Naive thymus-derived CD4-positive, alpha-beta T cell (primary cell): ENCODE measurements at regions of chr16 and their contacts with region 1.

Region 1: DNA sequence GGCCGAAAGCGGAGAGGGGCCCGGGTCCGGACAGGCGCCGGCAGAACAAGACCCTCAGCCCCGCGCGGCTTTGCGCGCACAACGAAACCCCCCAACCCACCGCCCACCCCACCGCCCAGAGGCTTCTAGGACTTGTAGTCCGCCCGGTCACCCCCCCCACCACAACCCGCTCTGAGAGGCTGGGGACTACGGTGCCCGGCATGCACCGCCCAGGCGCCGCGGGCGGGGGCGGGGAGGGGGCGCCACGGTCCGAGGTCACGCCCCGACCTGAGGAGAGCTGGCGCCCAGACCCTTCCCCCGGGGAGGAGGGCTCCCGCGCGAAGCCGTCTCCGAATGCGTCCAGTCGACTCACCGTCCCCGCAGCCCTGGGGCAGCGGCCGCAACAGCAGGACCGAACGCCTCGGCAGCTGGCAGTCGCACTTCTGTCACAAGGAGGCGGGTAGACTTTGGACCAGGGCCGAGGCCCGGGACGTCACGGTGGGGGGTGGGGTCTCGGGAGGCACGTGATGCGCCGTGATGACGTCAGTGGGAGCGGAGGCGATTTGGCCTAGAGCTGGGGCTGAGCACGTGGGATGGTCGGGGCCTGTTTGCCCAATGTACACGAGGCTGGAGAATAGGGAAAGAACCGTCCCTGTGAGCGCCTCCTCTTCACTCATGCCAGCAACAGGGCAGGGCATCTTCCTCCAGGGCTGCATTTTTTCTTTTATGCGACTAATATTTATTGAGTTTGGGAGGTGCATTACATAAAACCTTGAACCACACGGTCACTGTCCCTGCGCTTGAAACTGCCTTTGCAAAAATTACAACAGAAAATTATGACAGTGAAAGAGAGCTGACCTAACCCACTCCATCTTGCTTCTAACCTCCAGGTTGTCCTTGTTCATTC is at the start of gene CDIP1:
- DNase-seq: peak; percentile 85 to 93 (median 90)
- ATAC-seq: peak; percentile 92
- H3K4me3 ChIP-seq: peak within 1 kb of the TSS; percentile 81
- H3K4me3 Mint-ChIP-seq: peak within 1 kb of the TSS; percentile 66 to 91 (median 82)
- H3K27ac ChIP-seq: peak within 1 kb of the TSS; percentile 96
- H3K27ac Mint-ChIP-seq: peak within 1 kb of the TSS; percentile 78 to 97 (median 92)
- H3K4me1 ChIP-seq: peaks cover 10 to 33% of the 10 kb centered on the region in 2 donors
- H3K4me1 Mint-ChIP-seq: peaks cover 24 to 44% (median 40%) of the 10 kb centered on the region in 7 donors
- H3K27me3 ChIP-seq: no peaks in the 10 kb centered on the region
- H3K27me3 Mint-ChIP-seq: peaks cover 0 to 9% (median 0%) of the 10 kb centered on the region in 5 donors
- total RNA-seq, gene CDIP1: 28.1 to 41.1 (median 31.0) TPM

Region 2: DNA sequence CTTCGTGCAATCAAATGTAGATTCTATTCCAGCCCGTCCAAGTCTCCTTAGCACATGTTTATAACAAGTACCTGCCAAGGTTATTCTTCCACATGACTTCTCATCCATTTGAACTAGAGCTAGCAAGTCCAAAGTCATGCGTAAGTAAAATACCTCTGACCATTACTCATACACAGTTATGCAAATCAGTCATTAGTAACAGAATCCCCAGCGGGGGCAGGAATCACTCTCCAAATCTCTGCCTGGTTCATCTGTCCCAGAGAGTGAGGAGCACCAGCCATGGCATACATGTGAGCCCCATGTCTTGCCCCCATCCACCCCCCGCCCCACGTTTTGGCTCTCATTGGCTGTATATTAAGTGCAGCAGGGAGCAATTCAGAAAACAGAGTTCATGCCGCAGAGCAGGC is 324.4 kb before region 1 on chr16:
- CTCF ChIA-PET with region 1: no interaction called
- POLR2A ChIA-PET with region 1: no interaction called
- intact Hi-C with region 1: no loop called
- DNase-seq: no peak
- ATAC-seq: no peak
- H3K4me3 ChIP-seq: no peak overlapping the region
- H3K4me3 Mint-ChIP-seq: no peak overlapping the region
- H3K27ac ChIP-seq: no peak overlapping the region
- H3K27ac Mint-ChIP-seq: no peak overlapping the region
- H3K4me1 ChIP-seq: no peaks in the 10 kb centered on the region
- H3K4me1 Mint-ChIP-seq: no peaks in the 10 kb centered on the region
- H3K27me3 ChIP-seq: no peaks in the 10 kb centered on the region
- H3K27me3 Mint-ChIP-seq: peaks cover 0 to 10% (median 0%) of the 10 kb centered on the region in 5 donors

Region 3: DNA sequence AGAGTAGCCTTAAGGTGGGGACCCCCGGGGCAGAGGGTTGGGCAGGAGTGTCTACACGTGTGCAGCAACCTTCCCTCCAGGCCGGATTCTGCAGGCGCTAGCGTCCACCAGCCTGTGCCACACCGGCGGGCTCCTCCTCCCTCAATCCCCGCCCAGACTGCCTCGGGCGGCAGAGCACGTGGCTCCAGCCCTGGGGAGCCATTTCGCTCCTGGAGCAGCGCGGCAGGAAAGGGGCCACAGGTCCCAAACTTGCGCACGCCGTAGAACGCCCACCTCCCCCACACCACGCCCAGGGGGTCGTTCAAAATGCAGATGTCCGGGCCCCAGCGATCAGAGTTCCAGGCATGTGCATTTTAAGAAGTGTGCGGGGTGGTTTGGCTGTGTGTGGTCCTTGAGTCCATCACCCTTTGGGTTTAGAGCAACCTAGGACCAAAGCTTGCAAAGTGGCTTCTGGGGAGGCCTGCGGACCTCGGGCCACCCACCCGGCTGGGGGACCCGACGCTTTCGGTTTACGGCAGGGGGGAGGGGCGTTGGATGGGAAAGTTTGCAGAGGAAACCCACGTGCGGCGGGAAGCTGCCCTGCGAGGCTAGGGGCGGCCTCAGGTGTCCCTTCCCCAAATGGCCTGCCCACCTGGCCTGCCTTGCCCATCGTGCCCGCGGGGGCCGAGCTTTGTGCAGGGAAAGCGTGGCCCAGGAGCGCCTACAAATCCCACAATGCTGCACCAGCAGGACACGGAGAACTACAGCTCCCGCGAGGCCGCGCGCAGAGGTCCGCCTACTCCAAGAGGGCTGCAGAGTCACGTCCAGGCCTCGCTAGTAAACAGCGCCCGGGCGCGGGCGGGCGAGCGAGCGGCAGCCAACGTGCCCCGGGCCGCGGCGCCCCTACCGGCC is 267.2 kb before region 1 on chr16:
- CTCF ChIA-PET with region 1: no interaction called
- POLR2A ChIA-PET with region 1: interaction called, 3 read pairs
- intact Hi-C with region 1: loop called in 1 of 2 experiments (anchors 5 kb)
- DNase-seq: peak; percentile 68 to 90 (median 84)
- ATAC-seq: peak; percentile 89
- H3K4me3 ChIP-seq: peak overlapping the region; percentile 99
- H3K4me3 Mint-ChIP-seq: peak overlapping the region; percentile 85 to 97 (median 92)
- H3K27ac ChIP-seq: peak overlapping the region; percentile 58
- H3K27ac Mint-ChIP-seq: peak overlapping the region; percentile 67 to 98 (median 83)
- H3K4me1 ChIP-seq: peaks cover 5 to 13% of the 10 kb centered on the region in 2 donors
- H3K4me1 Mint-ChIP-seq: peaks cover 8 to 23% (median 15%) of the 10 kb centered on the region in 7 donors
- H3K27me3 ChIP-seq: no peaks in the 10 kb centered on the region
- H3K27me3 Mint-ChIP-seq: no peaks in the 10 kb centered on the region

Region 4: DNA sequence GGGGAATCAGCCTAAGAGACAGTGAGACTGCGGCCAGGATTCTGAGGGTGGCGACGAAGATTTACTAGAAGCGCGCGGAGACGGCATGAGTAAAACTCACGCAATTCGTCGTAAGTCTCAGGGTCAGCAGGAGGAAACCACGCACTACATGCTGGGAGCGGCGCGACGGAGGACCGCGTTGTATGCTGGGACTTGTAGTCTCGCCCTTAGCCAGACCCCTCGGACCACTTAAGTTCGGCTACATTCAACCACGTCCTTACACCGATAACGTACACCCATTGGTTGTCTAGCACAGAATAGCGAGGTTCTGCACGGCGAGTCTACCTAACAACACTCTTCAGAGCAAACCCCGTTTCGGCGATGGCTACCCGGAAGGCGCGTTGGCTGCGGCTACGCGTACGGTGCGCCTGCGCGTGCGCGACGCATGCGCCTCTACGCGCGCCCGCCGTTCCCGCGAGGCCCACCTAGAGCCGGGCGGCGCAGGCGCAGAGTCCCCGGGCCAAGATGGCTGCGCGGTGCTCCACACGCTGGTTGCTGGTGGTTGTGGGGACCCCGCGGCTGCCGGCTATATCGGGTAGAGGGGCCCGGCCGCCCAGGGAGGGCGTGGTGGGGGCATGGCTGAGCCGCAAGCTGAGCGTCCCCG is 113.1 kb before region 1 on chr16 and contains the start of gene DNAJA3:
- CTCF ChIA-PET with region 1: no interaction called
- POLR2A ChIA-PET with region 1: interaction called, 4 read pairs
- intact Hi-C with region 1: loop called in 1 of 2 experiments (anchors 1 kb)
- DNase-seq: peak; percentile 91 to 97 (median 95)
- ATAC-seq: peak; percentile 93
- H3K4me3 ChIP-seq: peak within 1 kb of the TSS; percentile 97
- H3K4me3 Mint-ChIP-seq: peak within 1 kb of the TSS; percentile 92 to 99 (median 98)
- H3K27ac ChIP-seq: peak within 1 kb of the TSS; percentile 95
- H3K27ac Mint-ChIP-seq: peak within 1 kb of the TSS; percentile 99 to 100 (median 100)
- H3K4me1 ChIP-seq: peaks cover 18% of the 10 kb centered on the region in 2 donors
- H3K4me1 Mint-ChIP-seq: peaks cover 26 to 37% (median 31%) of the 10 kb centered on the region in 7 donors
- H3K27me3 ChIP-seq: no peaks in the 10 kb centered on the region
- H3K27me3 Mint-ChIP-seq: peaks cover 0 to 4% (median 0%) of the 10 kb centered on the region in 5 donors
- total RNA-seq, gene DNAJA3: 33.6 to 79.8 (median 70.5) TPM

Region 5: DNA sequence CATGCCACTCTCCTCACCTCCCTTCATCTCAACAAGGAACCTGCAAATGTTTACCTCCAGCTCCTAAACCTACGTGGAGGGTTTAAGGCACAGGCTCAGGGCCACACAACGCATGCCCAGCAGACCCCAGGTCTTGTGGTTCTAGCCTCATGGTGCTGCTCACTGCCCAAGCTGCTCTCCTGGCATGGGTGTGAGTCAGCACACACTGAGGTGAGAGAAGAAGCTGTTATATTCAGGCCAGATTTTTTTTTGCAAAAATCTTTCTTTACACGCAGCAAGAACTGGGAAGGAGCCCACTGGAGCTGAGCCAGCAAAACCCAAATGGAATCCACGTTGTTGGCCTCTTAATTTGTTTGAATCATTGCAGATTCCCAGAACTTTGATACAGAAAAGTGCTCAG is 12.0 kb after region 1 on chr16:
- CTCF ChIA-PET with region 1: interaction called, 5 read pairs
- POLR2A ChIA-PET with region 1: interaction called, 5 read pairs
- intact Hi-C with region 1: loop called in 1 of 2 experiments (anchors 1 kb)
- DNase-seq: no peak
- ATAC-seq: no peak
- H3K4me3 ChIP-seq: no peak overlapping the region
- H3K4me3 Mint-ChIP-seq: no peak overlapping the region
- H3K27ac ChIP-seq: no peak overlapping the region
- H3K27ac Mint-ChIP-seq: peak overlapping the region in 1 of 9 donors; percentile 36
- H3K4me1 ChIP-seq: peaks cover 0 to 7% of the 10 kb centered on the region in 2 donors
- H3K4me1 Mint-ChIP-seq: peaks cover 0 to 10% (median 5%) of the 10 kb centered on the region in 7 donors
- H3K27me3 ChIP-seq: no peaks in the 10 kb centered on the region
- H3K27me3 Mint-ChIP-seq: peaks cover 0 to 6% (median 0%) of the 10 kb centered on the region in 5 donors

Region 6: GRCh38 chr16:4561596-4561995 is 23.0 kb after region 1 on chr16:
- CTCF ChIA-PET with region 1: no interaction called
- POLR2A ChIA-PET with region 1: no interaction called
- intact Hi-C with region 1: no loop called
- DNase-seq: no peak
- ATAC-seq: no peak
- H3K4me3 ChIP-seq: no peak overlapping the region
- H3K4me3 Mint-ChIP-seq: no peak overlapping the region
- H3K27ac ChIP-seq: no peak overlapping the region
- H3K27ac Mint-ChIP-seq: no peak overlapping the region
- H3K4me1 ChIP-seq: no peaks in the 10 kb centered on the region
- H3K4me1 Mint-ChIP-seq: peaks cover 0 to 6% (median 0%) of the 10 kb centered on the region in 7 donors
- H3K27me3 ChIP-seq: no peaks in the 10 kb centered on the region
- H3K27me3 Mint-ChIP-seq: peaks cover 0 to 9% (median 0%) of the 10 kb centered on the region in 5 donors

Region 7: GRCh38 chr16:4766874-4767628 is 228.5 kb after region 1 on chr16 and contains the start of gene ZNF500:
- CTCF ChIA-PET with region 1: no interaction called
- POLR2A ChIA-PET with region 1: no interaction called
- intact Hi-C with region 1: loop called in 1 of 2 experiments (anchors 1 kb)
- DNase-seq: peak; percentile 90 to 98 (median 92)
- ATAC-seq: peak; percentile 99
- H3K4me3 ChIP-seq: peak within 1 kb of the TSS; percentile 82
- H3K4me3 Mint-ChIP-seq: peak within 1 kb of the TSS; percentile 90 to 94 (median 92)
- H3K27ac ChIP-seq: peak within 1 kb of the TSS; percentile 84
- H3K27ac Mint-ChIP-seq: peak within 1 kb of the TSS; percentile 86 to 96 (median 92)
- H3K4me1 ChIP-seq: peaks cover 17 to 19% of the 10 kb centered on the region in 2 donors
- H3K4me1 Mint-ChIP-seq: peaks cover 24 to 49% (median 34%) of the 10 kb centered on the region in 7 donors
- H3K27me3 ChIP-seq: no peaks in the 10 kb centered on the region
- H3K27me3 Mint-ChIP-seq: no peaks in the 10 kb centered on the region
- total RNA-seq, gene ZNF500: 13.8 to 43.0 (median 24.7) TPM

Region 8: DNA sequence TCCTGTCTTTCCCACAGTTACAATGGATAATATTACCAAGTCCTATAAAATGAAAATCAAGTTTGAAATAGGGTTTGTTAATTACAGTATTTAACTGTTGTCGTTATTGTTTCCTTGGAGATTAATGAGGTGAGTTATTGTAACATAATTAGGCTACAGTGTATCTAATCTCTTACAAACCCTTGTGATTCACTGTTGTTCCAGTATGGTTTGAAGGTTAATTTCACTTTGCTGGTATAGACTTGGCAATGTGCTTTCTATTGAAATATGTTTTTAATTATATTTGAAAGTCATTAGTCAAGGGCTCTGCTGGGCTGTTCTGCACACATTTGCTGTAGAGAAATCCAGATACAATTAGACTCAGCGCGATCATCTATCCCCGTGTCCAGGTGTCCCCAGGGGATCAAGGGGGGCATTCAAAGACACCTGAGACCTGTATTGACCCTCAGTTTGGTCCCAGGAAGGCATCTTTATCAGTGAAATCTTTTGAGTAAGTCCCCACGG is 1183.6 kb after region 1 on chr16:
- CTCF ChIA-PET with region 1: no interaction called
- POLR2A ChIA-PET with region 1: no interaction called
- intact Hi-C with region 1: no loop called
- DNase-seq: no peak
- ATAC-seq: no peak
- H3K4me3 ChIP-seq: no peak overlapping the region
- H3K4me3 Mint-ChIP-seq: no peak overlapping the region
- H3K27ac ChIP-seq: no peak overlapping the region
- H3K27ac Mint-ChIP-seq: no peak overlapping the region
- H3K4me1 ChIP-seq: no peaks in the 10 kb centered on the region
- H3K4me1 Mint-ChIP-seq: no peaks in the 10 kb centered on the region
- H3K27me3 ChIP-seq: no peaks in the 10 kb centered on the region
- H3K27me3 Mint-ChIP-seq: no peaks in the 10 kb centered on the region